H1 (cell line): ENCODE measurements at regions of chr4 and their contacts with region 1.

Region 1: DNA sequence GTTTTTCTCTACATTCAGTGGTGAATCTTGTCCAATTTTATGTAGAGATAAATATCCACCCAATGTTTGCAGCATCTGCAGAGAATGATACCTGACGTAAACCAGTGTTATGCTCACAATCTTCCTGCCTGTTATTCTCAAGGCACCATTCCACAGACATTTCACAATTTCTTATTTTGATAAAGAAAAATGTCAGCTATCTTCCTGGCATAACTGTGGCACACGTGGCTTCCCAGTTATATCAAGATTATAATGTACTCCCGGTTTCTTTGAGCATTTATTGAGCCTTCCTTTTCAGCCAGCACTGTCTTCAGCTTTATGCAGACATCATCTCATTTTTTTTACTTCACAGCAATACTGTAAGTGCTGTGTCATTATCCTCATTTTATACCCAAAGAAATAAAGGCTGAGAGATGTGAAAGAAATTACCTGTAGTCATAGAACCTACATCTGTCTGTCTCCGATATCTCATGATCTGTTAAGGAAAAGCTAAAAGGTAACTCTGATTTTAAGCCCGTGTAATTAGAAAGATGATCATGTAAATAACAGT is 1300.8 kb upstream of the TENM3 start:
- DNase-seq: no peak
- H3K4me3 ChIP-seq: no peak overlapping the region
- H3K27ac ChIP-seq: no peak overlapping the region
- H3K4me1 ChIP-seq: no peaks in the 10 kb centered on the region
- H3K27me3 ChIP-seq: no peaks in the 10 kb centered on the region
- CTCF ChIP-seq: no peak
- EP300 ChIP-seq: no peak
- POLR2A ChIP-seq: no peak
- RAD21 ChIP-seq: no peak

Region 2: DNA sequence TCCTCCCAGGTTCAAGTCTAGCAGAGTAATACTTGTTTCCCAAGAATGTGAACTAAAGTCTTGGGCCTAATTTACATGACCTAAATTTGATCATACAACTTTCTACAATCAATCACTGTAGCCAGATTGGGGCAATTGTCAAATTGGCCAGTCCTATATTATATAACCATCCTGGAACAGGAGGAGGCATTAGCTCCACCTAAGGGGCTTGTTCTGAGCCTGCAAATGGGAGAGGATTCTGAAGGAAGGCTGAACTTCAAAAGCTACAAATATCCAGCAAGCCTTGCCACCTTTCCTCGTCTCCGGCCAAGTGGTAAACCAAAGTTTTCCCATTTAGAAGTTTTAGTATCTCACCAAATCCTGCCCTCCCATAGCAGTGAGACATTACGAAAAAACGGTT is 11.1 kb after region 1 on chr4:
- CTCF ChIA-PET with region 1: interaction called, 17 read pairs
- POLR2A ChIA-PET with region 1: no interaction called
- DNase-seq: no peak
- H3K4me3 ChIP-seq: no peak overlapping the region
- H3K27ac ChIP-seq: no peak overlapping the region
- H3K4me1 ChIP-seq: no peaks in the 10 kb centered on the region; a peak in 1 of 7 replicates
- H3K27me3 ChIP-seq: no peaks in the 10 kb centered on the region
- CTCF ChIP-seq: peak in 2 of 3 experiments; percentile 41 to 65; a peak in 3 of 4 replicates
- EP300 ChIP-seq: no peak
- POLR2A ChIP-seq: no peak
- RAD21 ChIP-seq: peak; percentile 42 to 57

Region 3: DNA sequence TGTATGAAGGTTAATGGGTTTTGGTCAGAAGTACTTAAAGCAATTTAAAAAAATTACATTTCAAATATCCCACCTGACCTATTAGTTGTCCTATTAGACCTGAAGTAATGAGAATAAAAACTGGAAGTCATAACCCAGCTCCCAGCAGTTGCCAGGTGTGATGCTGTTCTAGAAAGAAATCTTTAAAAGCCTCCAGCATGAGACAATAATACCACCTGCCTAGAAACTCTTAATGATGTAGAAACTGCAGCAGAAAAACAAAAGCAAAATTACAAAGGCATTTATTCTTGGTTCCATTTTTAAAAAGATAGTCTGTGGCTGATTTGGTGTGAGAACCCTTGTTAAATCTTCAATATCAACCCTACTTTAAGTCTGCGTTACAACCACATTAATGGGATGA is 163.0 kb after region 1 on chr4:
- CTCF ChIA-PET with region 1: no interaction called
- POLR2A ChIA-PET with region 1: no interaction called
- DNase-seq: no peak
- H3K4me3 ChIP-seq: no peak overlapping the region
- H3K27ac ChIP-seq: no peak overlapping the region
- H3K4me1 ChIP-seq: no peaks in the 10 kb centered on the region
- H3K27me3 ChIP-seq: no peaks in the 10 kb centered on the region
- CTCF ChIP-seq: no peak
- EP300 ChIP-seq: no peak
- POLR2A ChIP-seq: no peak
- RAD21 ChIP-seq: no peak